Esophagus muscularis mucosa (tissue), 4 donors: ENCODE measurements at regions of chr5 and their contacts with region 1.

Region 1: DNA sequence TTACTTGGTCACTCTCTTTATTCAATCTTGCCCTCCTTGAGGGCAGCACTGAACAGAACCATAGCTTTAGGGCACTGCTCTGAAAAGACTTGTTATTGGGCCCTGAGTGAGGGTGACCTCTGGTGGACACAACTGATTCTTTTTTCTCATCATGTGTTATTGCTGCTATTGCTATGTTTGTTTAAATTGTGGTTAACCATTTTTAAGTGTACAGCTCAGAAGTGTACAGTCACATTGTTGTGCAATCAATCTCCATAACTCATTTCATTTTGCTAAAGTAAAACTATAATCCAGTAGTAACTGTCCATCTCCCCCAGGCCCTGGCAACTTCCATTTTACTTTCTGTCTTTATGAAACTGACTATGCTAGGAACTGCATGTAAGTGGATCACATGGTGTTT is 351.1 kb upstream of the RIOK2 start:
- DNase-seq: no peak
- H3K4me3 ChIP-seq: no peak overlapping the region
- H3K27ac ChIP-seq: peak overlapping the region in 1 of 4 donors; percentile 27
- H3K4me1 ChIP-seq: peaks cover 0 to 17% (median 6%) of the 10 kb centered on the region in 4 donors
- H3K27me3 ChIP-seq: no peaks in the 10 kb centered on the region
- CTCF ChIP-seq: peak; percentile 60 to 71 (median 62)
- EP300 ChIP-seq: no peak
- POLR2A ChIP-seq: no peak

Region 2: GRCh38 chr5:97297063-97297703 is 237.0 kb before region 1 on chr5:
- intact Hi-C with region 1: loop called (anchors 10 kb)
- DNase-seq: no peak
- H3K4me3 ChIP-seq: no peak overlapping the region
- H3K27ac ChIP-seq: no peak overlapping the region
- H3K4me1 ChIP-seq: peaks cover 0 to 5% (median 0%) of the 10 kb centered on the region in 4 donors
- H3K27me3 ChIP-seq: no peaks in the 10 kb centered on the region
- CTCF ChIP-seq: peak; percentile 39 to 54 (median 54)
- EP300 ChIP-seq: no peak
- POLR2A ChIP-seq: no peak

Region 3: GRCh38 chr5:97425511-97425910 is 108.7 kb before region 1 on chr5:
- intact Hi-C with region 1: loop called (anchors 10 kb)
- DNase-seq: no peak
- H3K4me3 ChIP-seq: no peak overlapping the region
- H3K27ac ChIP-seq: no peak overlapping the region
- H3K4me1 ChIP-seq: peaks cover 0 to 9% (median 6%) of the 10 kb centered on the region in 4 donors
- H3K27me3 ChIP-seq: no peaks in the 10 kb centered on the region
- CTCF ChIP-seq: peak in 1 of 3 experiments; percentile 25
- EP300 ChIP-seq: no peak
- POLR2A ChIP-seq: no peak